ENCODE measurements at regions of chr2 and their contacts with region 1.

Region 1: DNA sequence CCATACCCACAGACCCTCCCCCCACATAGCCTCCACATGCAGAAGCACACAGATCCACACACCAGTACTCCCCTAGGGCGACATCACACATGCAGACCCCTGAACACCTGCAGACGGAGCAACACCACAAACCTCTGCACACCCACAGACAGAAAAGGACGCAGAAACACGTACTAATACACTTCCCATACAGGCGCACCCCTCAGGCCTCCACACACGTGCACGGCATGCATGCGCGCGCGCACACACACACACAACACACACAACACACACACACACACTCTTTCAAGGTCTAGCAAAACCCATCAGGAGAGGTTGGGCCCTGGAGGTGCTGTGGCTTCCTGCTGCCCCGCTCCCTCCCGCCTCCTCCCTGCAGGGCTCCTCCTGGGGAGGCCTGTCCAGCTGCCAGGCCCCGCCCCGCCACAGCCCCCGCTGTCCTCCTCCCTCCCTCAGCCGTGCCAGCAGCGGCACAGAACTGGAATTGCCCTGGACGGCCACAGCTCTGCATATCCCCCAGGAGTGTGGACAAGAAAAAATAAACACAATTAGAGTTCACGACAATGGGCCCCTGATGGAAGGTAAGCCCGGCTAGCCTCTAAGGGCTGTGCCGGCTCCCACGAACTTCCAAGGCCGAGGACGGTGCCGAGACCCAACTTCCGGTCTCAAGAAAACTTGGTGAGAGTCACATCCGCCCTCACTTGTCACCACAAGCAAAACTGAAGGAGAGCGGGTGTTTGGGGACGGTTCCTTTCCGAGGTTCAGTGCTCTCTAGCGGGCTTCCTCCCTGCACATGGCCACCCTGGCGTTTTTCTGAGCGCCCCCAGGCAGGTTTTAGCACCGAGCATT is 6.8 kb downstream of the ZFP36L2 start:
- DNase-seq: peak; percentile 81 to 91
- H3K4me3 ChIP-seq: peak overlapping the region; percentile 72
- H3K27ac ChIP-seq: peak overlapping the region; percentile 92
- H3K4me1 ChIP-seq: peaks cover 51% of the 10 kb centered on the region
- H3K27me3 ChIP-seq: no peaks in the 10 kb centered on the region
- CTCF ChIP-seq: no peak; the same call in 1 of the 2 replicates

Region 2: GRCh38 chr2:42810121-42810970 is 409.3 kb before region 1 on chr2:
- CTCF ChIA-PET with region 1: no interaction called
- POLR2A ChIA-PET with region 1: interaction called, 11 read pairs
- intact Hi-C with region 1: no loop called
- DNase-seq: peak; percentile 92 to 97
- H3K4me3 ChIP-seq: peak overlapping the region; percentile 71
- H3K27ac ChIP-seq: peak overlapping the region; percentile 82
- H3K4me1 ChIP-seq: peaks cover 9% of the 10 kb centered on the region
- H3K27me3 ChIP-seq: no peaks in the 10 kb centered on the region
- CTCF ChIP-seq: no peak

Region 3: DNA sequence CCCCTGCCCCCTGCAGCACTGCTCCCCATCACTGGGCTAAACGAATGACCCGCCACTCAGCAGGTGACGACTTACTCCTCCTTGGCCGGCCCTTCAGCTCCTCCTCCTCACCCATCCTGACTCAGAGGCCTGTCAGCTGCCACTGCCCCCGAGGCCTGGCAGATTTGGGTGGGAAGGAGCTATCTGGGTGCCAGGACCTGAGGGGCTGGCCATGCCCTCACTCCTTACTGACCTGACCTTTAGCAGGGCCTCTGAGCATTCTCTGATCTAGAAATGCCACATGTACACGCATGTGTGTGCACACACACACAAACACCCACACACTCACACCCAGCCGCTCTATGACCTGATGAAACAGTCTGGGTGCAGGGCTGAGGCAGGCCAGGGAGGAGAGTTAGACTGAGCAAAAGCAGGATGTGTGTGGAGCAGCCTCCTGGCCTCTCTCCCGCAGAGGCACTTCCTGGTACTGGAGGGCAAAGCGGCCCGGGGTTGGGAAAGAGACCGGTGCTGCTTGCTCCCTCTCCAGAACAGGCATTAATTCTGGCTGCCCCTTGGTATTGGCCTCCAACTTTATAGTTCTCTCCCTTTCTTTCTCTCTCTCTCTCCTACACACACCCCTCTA is 61.2 kb before region 1 on chr2:
- CTCF ChIA-PET with region 1: no interaction called
- POLR2A ChIA-PET with region 1: interaction called, 5 read pairs
- intact Hi-C with region 1: loop called (anchors 1 kb)
- DNase-seq: peak; percentile 75 to 88
- H3K4me3 ChIP-seq: peak overlapping the region; percentile 22; the same call in 1 of the 2 replicates
- H3K27ac ChIP-seq: peak overlapping the region; percentile 95
- H3K4me1 ChIP-seq: peaks cover 55% of the 10 kb centered on the region
- H3K27me3 ChIP-seq: no peaks in the 10 kb centered on the region
- CTCF ChIP-seq: no peak

Region 4: GRCh38 chr2:43178602-43179542 is 40.7 kb before region 1 on chr2:
- CTCF ChIA-PET with region 1: interaction called, 6 read pairs
- POLR2A ChIA-PET with region 1: interaction called, 8 read pairs
- intact Hi-C with region 1: loop called (anchors 1 kb)
- DNase-seq: peak; percentile 90 to 91
- H3K4me3 ChIP-seq: peak overlapping the region; percentile 33; the same call in 1 of the 2 replicates
- H3K27ac ChIP-seq: peak overlapping the region; percentile 88
- H3K4me1 ChIP-seq: peaks cover 95% of the 10 kb centered on the region
- H3K27me3 ChIP-seq: no peaks in the 10 kb centered on the region
- CTCF ChIP-seq: no peak

Region 5: DNA sequence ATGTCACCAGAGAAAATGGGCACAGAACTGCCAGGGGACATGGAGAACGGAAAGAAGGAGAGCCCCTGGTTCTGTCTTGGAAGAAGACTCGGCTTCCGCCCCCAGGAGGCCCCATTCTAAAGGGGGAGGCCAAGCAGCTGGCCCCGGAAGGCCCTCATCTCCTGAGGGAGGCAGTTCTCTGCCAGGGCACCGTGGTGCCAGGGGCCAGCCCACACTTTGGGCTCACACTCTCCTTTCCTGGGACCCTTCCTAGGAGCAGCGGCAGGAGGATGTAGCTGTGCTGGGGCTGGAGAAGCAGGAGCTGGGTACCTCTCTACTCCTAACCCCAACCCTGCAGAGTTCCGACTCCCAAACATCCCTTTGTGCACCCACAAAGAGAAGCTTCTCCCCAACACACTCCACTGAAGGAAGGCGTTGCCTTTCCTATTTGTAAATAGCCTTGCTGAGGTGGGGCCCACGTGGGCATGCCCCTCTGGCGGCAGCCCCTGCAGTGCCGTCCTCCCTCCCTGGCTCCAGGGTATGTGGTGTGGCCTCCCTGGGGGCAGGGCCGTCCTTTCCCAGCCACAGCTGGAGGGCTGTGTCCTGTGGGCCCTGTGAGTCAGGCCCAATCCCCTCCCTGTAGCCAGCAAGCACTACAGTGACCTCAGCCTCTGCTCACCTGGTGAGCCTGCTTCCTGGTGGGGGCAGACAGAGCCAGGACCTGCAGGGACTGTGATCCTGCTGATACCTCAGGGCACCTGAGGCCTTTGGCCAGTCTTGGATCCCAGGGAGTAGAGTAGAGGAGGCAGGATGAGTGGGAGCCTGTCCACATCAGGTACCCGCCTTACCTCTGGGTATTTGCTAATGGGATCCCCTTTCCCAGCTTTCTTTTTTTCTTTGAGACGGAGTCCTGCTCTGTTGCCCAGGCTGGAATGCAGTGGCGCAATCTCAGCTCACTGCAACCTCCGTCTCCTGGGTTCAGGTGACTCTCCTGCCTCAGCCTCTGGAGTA is 19.8 kb before region 1 on chr2:
- CTCF ChIA-PET with region 1: no interaction called
- POLR2A ChIA-PET with region 1: interaction called, 14 read pairs
- intact Hi-C with region 1: loop called (anchors 2 kb)
- DNase-seq: peak; percentile 93 to 98
- H3K4me3 ChIP-seq: no peak overlapping the region
- H3K27ac ChIP-seq: peak overlapping the region; percentile 86
- H3K4me1 ChIP-seq: peaks cover 40% of the 10 kb centered on the region
- H3K27me3 ChIP-seq: no peaks in the 10 kb centered on the region
- CTCF ChIP-seq: no peak

Region 6: GRCh38 chr2:45055162-45055605 is 1835.6 kb after region 1 on chr2:
- CTCF ChIA-PET with region 1: no interaction called
- POLR2A ChIA-PET with region 1: no interaction called
- intact Hi-C with region 1: no loop called
- DNase-seq: no peak
- H3K4me3 ChIP-seq: no peak overlapping the region
- H3K27ac ChIP-seq: no peak overlapping the region
- H3K4me1 ChIP-seq: no peaks in the 10 kb centered on the region
- H3K27me3 ChIP-seq: no peaks in the 10 kb centered on the region
- CTCF ChIP-seq: no peak